GM12878 (cell line): ENCODE measurements at regions of chr15 and their contacts with region 1.

Region 1: GRCh38 chr15:61195116-61196002 is 33.7 kb downstream of the RORA start:
- DNase-seq: peak; percentile 7
- ATAC-seq: peak; percentile 81
- H3K4me3 ChIP-seq: no peak overlapping the region
- H3K27ac ChIP-seq: no peak overlapping the region
- H3K4me1 ChIP-seq: no peaks in the 10 kb centered on the region
- H3K27me3 ChIP-seq: peaks cover 5% of the 10 kb centered on the region in 2 experiments; a peak in 2 of 4 replicates
- CTCF ChIP-seq: peak; percentile 63 to 86 (median 76)
- EP300 ChIP-seq: no peak
- POLR2A ChIP-seq: no peak
- RAD21 ChIP-seq: peak; percentile 61

Region 2: GRCh38 chr15:61621146-61621545 is 425.8 kb after region 1 on chr15:
- CTCF ChIA-PET with region 1: interaction called, 17 read pairs
- POLR2A ChIA-PET with region 1: no interaction called
- RAD21 ChIA-PET with region 1: interaction called, 3 read pairs
- SMC1A ChIA-PET with region 1: interaction called, 3 read pairs
- in situ Hi-C with region 1: no loop called
- intact Hi-C with region 1: loop called (anchors 10 kb)
- DNase-seq: no peak
- ATAC-seq: peak; percentile 61
- H3K4me3 ChIP-seq: no peak overlapping the region
- H3K27ac ChIP-seq: no peak overlapping the region
- H3K4me1 ChIP-seq: no peaks in the 10 kb centered on the region
- H3K27me3 ChIP-seq: no peaks in the 10 kb centered on the region
- CTCF ChIP-seq: peak; percentile 43 to 55 (median 45); a peak in 5 of 6 replicates
- EP300 ChIP-seq: no peak
- POLR2A ChIP-seq: no peak
- RAD21 ChIP-seq: peak; percentile 33; the same call in 1 of the 2 replicates